Caco-2 (cell line): ENCODE measurements at regions of chr7 and their contacts with region 1.

Region 1: GRCh38 chr7:30740424-30741181 is 11.3 kb upstream of the INMT start:
- DNase-seq: peak; percentile 86 to 89
- H3K4me3 ChIP-seq: no peak overlapping the region
- H3K4me3 Mint-ChIP-seq: no peak overlapping the region
- H3K27ac Mint-ChIP-seq: no peak overlapping the region
- H3K4me1 ChIP-seq: peaks cover 4% of the 10 kb centered on the region; the same call in 1 of the 2 replicates
- H3K4me1 Mint-ChIP-seq: peaks cover 10% of the 10 kb centered on the region
- H3K27me3 ChIP-seq: no peaks in the 10 kb centered on the region; the same call in 1 of the 2 replicates
- H3K27me3 Mint-ChIP-seq: peaks cover 6% of the 10 kb centered on the region
- CTCF ChIP-seq: peak; percentile 96 to 98

Region 2: DNA sequence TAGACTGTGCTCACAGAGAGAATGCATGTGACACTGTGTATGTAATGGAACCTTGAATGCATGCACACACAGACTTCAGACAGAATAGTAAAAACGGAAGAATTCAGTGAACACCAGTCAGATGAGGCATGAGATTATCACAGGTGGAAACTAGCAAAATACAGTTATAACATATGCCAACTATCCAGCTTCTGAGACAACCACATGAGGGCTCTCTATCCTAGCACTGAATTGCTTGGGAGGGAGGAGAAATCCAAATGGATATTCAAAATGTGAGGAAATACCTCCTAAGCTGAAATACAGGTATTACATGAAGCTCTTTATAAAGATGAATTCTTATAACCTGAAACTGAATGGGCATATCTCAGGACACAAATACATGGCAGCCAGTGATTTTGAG is 115.3 kb before region 1 on chr7:
- CTCF ChIA-PET with region 1: interaction called, 3 read pairs
- POLR2A ChIA-PET with region 1: no interaction called
- intact Hi-C with region 1: loop called (anchors 2 kb)
- DNase-seq: no peak
- H3K4me3 ChIP-seq: no peak overlapping the region
- H3K4me3 Mint-ChIP-seq: no peak overlapping the region
- H3K27ac Mint-ChIP-seq: no peak overlapping the region
- H3K4me1 ChIP-seq: no peaks in the 10 kb centered on the region
- H3K4me1 Mint-ChIP-seq: no peaks in the 10 kb centered on the region
- H3K27me3 ChIP-seq: no peaks in the 10 kb centered on the region
- H3K27me3 Mint-ChIP-seq: no peaks in the 10 kb centered on the region
- CTCF ChIP-seq: no peak

Region 3: GRCh38 chr7:30649717-30650420 is 90.7 kb before region 1 on chr7:
- CTCF ChIA-PET with region 1: no interaction called
- POLR2A ChIA-PET with region 1: no interaction called
- intact Hi-C with region 1: loop called (anchors 5 kb)
- DNase-seq: no peak
- H3K4me3 ChIP-seq: no peak overlapping the region
- H3K4me3 Mint-ChIP-seq: no peak overlapping the region
- H3K27ac Mint-ChIP-seq: no peak overlapping the region
- H3K4me1 ChIP-seq: no peaks in the 10 kb centered on the region
- H3K4me1 Mint-ChIP-seq: no peaks in the 10 kb centered on the region
- H3K27me3 ChIP-seq: no peaks in the 10 kb centered on the region
- H3K27me3 Mint-ChIP-seq: no peaks in the 10 kb centered on the region
- CTCF ChIP-seq: no peak

Region 4: DNA sequence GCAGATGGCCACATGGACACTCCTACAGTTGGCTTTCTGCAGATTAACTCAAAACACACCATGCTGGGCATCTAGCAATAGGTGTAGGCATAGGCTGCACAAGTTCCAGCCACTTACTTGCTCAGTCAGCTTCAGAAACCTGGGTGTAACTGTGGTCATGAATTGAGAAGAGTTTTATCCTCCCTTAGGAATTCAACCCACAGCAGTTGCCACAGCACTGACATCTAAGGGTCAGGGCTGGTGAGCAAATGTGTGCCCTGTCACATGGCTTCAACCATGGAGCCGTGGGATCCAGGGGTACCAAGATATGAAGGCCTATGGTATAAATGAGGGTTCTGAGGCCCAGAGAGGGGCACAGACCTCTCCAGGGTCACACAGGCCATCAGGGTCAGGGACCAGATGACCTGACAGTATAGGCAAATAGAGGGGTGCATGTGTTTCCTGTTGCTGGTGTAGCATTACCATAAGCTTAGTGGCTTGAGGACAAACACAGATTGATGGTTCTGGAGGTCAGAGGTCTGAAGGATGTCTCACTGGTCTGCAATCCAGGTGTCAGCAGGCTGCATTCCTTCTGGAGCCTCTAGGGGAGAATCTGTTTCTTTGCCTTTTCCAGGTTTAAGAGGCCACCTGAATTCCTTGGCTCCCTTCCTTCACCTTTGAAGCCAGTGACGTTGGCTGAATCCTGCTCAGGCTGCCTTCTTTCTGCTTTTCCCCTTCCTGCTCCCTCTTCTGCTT is 54.7 kb after region 1 on chr7:
- CTCF ChIA-PET with region 1: no interaction called
- POLR2A ChIA-PET with region 1: no interaction called
- intact Hi-C with region 1: loop called (anchors 2 kb)
- DNase-seq: peak; percentile 79 to 86
- H3K4me3 ChIP-seq: no peak overlapping the region
- H3K4me3 Mint-ChIP-seq: no peak overlapping the region
- H3K27ac Mint-ChIP-seq: peak overlapping the region; percentile 74
- H3K4me1 ChIP-seq: peaks cover 38% of the 10 kb centered on the region
- H3K4me1 Mint-ChIP-seq: peaks cover 31% of the 10 kb centered on the region
- H3K27me3 ChIP-seq: no peaks in the 10 kb centered on the region
- H3K27me3 Mint-ChIP-seq: no peaks in the 10 kb centered on the region
- CTCF ChIP-seq: peak in 1 of 2 experiments; percentile 29

Region 5: GRCh38 chr7:30974605-30975255 is 234.1 kb after region 1 on chr7:
- CTCF ChIA-PET with region 1: no interaction called
- POLR2A ChIA-PET with region 1: no interaction called
- intact Hi-C with region 1: loop called (anchors 2 kb)
- DNase-seq: peak; percentile 63 to 72
- H3K4me3 ChIP-seq: no peak overlapping the region
- H3K4me3 Mint-ChIP-seq: no peak overlapping the region
- H3K27ac Mint-ChIP-seq: no peak overlapping the region
- H3K4me1 ChIP-seq: no peaks in the 10 kb centered on the region
- H3K4me1 Mint-ChIP-seq: no peaks in the 10 kb centered on the region
- H3K27me3 ChIP-seq: no peaks in the 10 kb centered on the region
- H3K27me3 Mint-ChIP-seq: peaks cover 7% of the 10 kb centered on the region
- CTCF ChIP-seq: peak; percentile 74 to 82